K562 (cell line): ENCODE measurements at regions of chr7 and their contacts with region 1.

Region 1: DNA sequence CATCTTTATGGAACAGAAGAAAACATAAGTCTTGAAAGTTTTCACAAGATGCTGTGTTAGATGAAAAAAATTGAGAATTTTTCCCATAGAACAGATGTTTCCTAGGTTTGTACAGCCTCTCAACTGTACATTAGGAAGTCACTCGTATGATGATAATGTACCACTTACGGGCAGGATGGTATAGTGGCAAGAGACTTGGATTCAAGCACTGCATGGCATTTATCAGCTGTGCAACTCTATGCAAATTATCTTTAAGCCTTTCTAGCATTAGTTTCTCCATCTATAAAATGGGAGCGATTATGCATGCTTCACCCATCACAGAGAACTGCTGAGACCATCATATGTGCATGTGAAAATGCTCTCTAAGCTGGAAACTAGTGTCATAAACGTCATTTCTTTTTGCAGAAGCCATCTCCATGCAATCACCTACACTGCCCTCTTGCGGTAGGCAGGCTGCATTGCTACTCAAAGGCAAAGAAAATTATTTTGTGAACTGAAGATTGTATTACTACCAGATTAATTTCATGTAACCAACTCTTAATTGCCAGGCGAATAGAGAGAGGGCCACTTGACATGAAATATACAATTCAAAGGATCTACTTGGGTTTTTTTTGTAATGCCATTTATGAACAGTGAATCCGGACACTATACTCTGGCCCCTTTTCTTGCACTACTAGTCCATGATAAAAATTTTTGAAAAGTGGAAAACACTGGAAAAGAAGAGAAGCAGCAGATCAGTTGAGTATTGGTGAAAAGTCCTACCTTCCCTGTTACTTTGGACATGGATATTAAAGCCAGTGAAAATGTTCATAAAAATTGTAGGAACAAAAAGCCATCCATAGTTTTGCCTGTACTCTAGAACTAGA is 102.3 kb downstream of the JAZF1 start:
- DNase-seq: peak; percentile 39 to 56 (median 42)
- ATAC-seq: no peak; the same call in 2 of the 3 replicates
- H3K4me3 ChIP-seq: no peak overlapping the region
- H3K27ac ChIP-seq: no peak overlapping the region
- H3K4me1 ChIP-seq: no peaks in the 10 kb centered on the region
- H3K27me3 ChIP-seq: peaks cover 6 to 22% of the 10 kb centered on the region in 2 experiments; a peak in 3 of 5 replicates
- CTCF ChIP-seq: peak; percentile 72 to 92 (median 89)
- EP300 ChIP-seq: no peak
- POLR2A ChIP-seq: no peak
- RAD21 ChIP-seq: peak; percentile 39 to 63; a peak in 3 of 4 replicates

Region 2: GRCh38 chr7:28041491-28042314 is 36.6 kb before region 1 on chr7:
- CTCF ChIA-PET with region 1: no interaction called
- POLR2A ChIA-PET with region 1: no interaction called
- in situ Hi-C with region 1: no loop called
- intact Hi-C with region 1: no loop called
- DNase-seq: no peak
- ATAC-seq: no peak
- H3K4me3 ChIP-seq: no peak overlapping the region
- H3K27ac ChIP-seq: no peak overlapping the region
- H3K4me1 ChIP-seq: peaks cover 0 to 5% of the 10 kb centered on the region in 2 experiments; a peak in 2 of 5 replicates
- H3K27me3 ChIP-seq: no peaks in the 10 kb centered on the region; a peak in 2 of 5 replicates
- CTCF ChIP-seq: no peak
- EP300 ChIP-seq: no peak
- POLR2A ChIP-seq: no peak
- RAD21 ChIP-seq: no peak

Region 3: GRCh38 chr7:28062197-28062991 is 15.9 kb before region 1 on chr7:
- CTCF ChIA-PET with region 1: interaction called, 4 read pairs
- POLR2A ChIA-PET with region 1: interaction called, 3 read pairs
- in situ Hi-C with region 1: no loop called
- intact Hi-C with region 1: loop called (anchors 2 kb)
- DNase-seq: peak; percentile 8 to 65 (median 28)
- ATAC-seq: peak; percentile 99
- H3K4me3 ChIP-seq: no peak overlapping the region
- H3K27ac ChIP-seq: no peak overlapping the region
- H3K4me1 ChIP-seq: no peaks in the 10 kb centered on the region
- H3K27me3 ChIP-seq: peaks cover 0 to 7% of the 10 kb centered on the region in 2 experiments; a peak in 1 of 5 replicates
- CTCF ChIP-seq: peak; percentile 72 to 85 (median 85)
- EP300 ChIP-seq: no peak
- POLR2A ChIP-seq: no peak
- RAD21 ChIP-seq: peak; percentile 36 to 64; a peak in 3 of 4 replicates

Region 4: GRCh38 chr7:28389504-28390395 is 311.5 kb after region 1 on chr7:
- CTCF ChIA-PET with region 1: no interaction called
- POLR2A ChIA-PET with region 1: no interaction called
- in situ Hi-C with region 1: no loop called
- intact Hi-C with region 1: no loop called
- DNase-seq: peak; percentile 13 to 52 (median 42)
- ATAC-seq: no peak
- H3K4me3 ChIP-seq: no peak overlapping the region
- H3K27ac ChIP-seq: no peak overlapping the region
- H3K4me1 ChIP-seq: no peaks in the 10 kb centered on the region
- H3K27me3 ChIP-seq: no peaks in the 10 kb centered on the region
- CTCF ChIP-seq: peak; percentile 39 to 79 (median 63); a peak in 5 of 6 replicates
- EP300 ChIP-seq: no peak
- POLR2A ChIP-seq: no peak
- RAD21 ChIP-seq: peak; percentile 52 to 63